ENCODE measurements at regions of chr11 and their contacts with region 1.

Region 1: DNA sequence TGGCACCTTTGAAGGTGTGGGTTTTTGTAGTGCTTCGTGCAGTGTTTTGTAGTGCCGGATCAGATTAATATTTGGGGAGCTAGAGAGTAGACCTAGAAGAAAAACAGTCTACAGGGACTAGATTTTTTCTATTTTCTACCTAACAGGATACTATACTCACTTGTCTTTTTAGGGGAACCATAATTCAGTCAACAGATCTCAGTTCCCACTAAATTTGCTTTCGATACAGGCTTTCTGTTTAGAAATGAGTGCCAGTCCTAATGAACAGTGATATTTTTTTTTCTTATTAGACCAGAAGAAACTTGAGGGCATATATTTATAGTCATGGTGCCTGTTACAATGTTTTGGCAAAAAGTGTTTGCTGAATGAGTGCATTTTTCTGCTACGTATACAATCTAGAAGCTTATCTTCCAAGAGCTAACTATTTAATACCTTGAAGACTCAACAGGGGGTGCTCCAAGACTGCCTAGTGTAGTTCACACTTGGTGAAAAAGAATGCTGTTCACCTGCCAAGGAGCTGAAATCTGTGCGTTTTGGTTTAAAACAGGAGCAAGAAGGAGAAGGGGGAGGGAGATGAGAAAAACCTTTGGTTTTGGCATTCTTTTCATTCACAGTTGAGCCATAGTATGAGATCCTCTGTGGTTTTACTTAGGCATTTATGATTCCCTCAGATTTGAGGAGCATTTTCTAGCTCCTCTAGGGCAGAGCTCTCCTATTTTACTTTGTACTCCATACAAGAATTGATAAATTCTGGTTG is 44.9 kb upstream of the VSTM5 start:
- DNase-seq: no peak
- H3K4me3 ChIP-seq: no peak overlapping the region
- H3K27ac ChIP-seq: no peak overlapping the region
- H3K4me1 ChIP-seq: no peaks in the 10 kb centered on the region
- H3K27me3 ChIP-seq: no peaks in the 10 kb centered on the region
- CTCF ChIP-seq: peak; percentile 78 to 87

Region 2: GRCh38 chr11:94417386-94417987 is 522.2 kb after region 1 on chr11:
- intact Hi-C with region 1: loop called (anchors 10 kb)
- DNase-seq: no peak
- H3K4me3 ChIP-seq: no peak overlapping the region
- H3K27ac ChIP-seq: no peak overlapping the region
- H3K4me1 ChIP-seq: no peaks in the 10 kb centered on the region
- H3K27me3 ChIP-seq: no peaks in the 10 kb centered on the region
- CTCF ChIP-seq: peak; percentile 43 to 45

Region 3: GRCh38 chr11:94504689-94505293 is 609.5 kb after region 1 on chr11:
- intact Hi-C with region 1: loop called (anchors 10 kb)
- DNase-seq: no peak
- H3K4me3 ChIP-seq: no peak overlapping the region
- H3K27ac ChIP-seq: no peak overlapping the region
- H3K4me1 ChIP-seq: no peaks in the 10 kb centered on the region
- H3K27me3 ChIP-seq: no peaks in the 10 kb centered on the region
- CTCF ChIP-seq: peak; percentile 53 to 55

Measured in tibial artery (tissue), 4 donors.